Activated B cell treated with CpG ODN at 0.5 μM for 24 hours (primary cell): ENCODE measurements at regions of chr19 and their contacts with region 1.

Region 1: GRCh38 chr19:21851596-21852345 is 15.8 kb upstream of the ZNF43 start:
- DNase-seq: peak; percentile 79
- ATAC-seq: peak; percentile 99
- H3K4me3 Mint-ChIP-seq: peak overlapping the region; percentile 95
- H3K27ac Mint-ChIP-seq: peak overlapping the region; percentile 84
- H3K4me1 Mint-ChIP-seq: peaks cover 21% of the 10 kb centered on the region
- H3K27me3 Mint-ChIP-seq: no peaks in the 10 kb centered on the region
- CTCF ChIP-seq: no peak

Region 2: GRCh38 chr19:20565321-20566018 is 1286.3 kb before region 1 on chr19 and contains the start of gene ZNF737:
- CTCF ChIA-PET with region 1: no interaction called
- POLR2A ChIA-PET with region 1: interaction called, 4 read pairs
- intact Hi-C with region 1: loop called (anchors 5 kb)
- DNase-seq: peak; percentile 72
- ATAC-seq: peak; percentile 90
- H3K4me3 Mint-ChIP-seq: peak within 1 kb of the TSS; percentile 99
- H3K27ac Mint-ChIP-seq: peak within 1 kb of the TSS; percentile 99
- H3K4me1 Mint-ChIP-seq: peaks cover 32% of the 10 kb centered on the region
- H3K27me3 Mint-ChIP-seq: no peaks in the 10 kb centered on the region
- CTCF ChIP-seq: no peak
- total RNA-seq, gene ZNF737: 42.7 and 50.9 TPM in 2 replicates

Region 3: GRCh38 chr19:21786931-21787330 is 64.8 kb before region 1 on chr19:
- CTCF ChIA-PET with region 1: no interaction called
- POLR2A ChIA-PET with region 1: no interaction called
- intact Hi-C with region 1: no loop called
- DNase-seq: no peak
- ATAC-seq: no peak
- H3K4me3 Mint-ChIP-seq: no peak overlapping the region
- H3K27ac Mint-ChIP-seq: no peak overlapping the region
- H3K4me1 Mint-ChIP-seq: no peaks in the 10 kb centered on the region
- H3K27me3 Mint-ChIP-seq: no peaks in the 10 kb centered on the region
- CTCF ChIP-seq: no peak

Region 4: GRCh38 chr19:21835810-21836444 is 15.8 kb before region 1 on chr19 and contains the start of gene ZNF43:
- CTCF ChIA-PET with region 1: interaction called, 5 read pairs
- POLR2A ChIA-PET with region 1: interaction called, 63 read pairs
- intact Hi-C with region 1: loop called (anchors 1 kb)
- DNase-seq: peak; percentile 77
- ATAC-seq: peak; percentile 98
- H3K4me3 Mint-ChIP-seq: peak within 1 kb of the TSS; percentile 100
- H3K27ac Mint-ChIP-seq: peak within 1 kb of the TSS; percentile 100
- H3K4me1 Mint-ChIP-seq: peaks cover 38% of the 10 kb centered on the region
- H3K27me3 Mint-ChIP-seq: no peaks in the 10 kb centered on the region
- CTCF ChIP-seq: no peak
- total RNA-seq, gene ZNF43: 41.8 and 52.4 TPM in 2 replicates

Region 5: DNA sequence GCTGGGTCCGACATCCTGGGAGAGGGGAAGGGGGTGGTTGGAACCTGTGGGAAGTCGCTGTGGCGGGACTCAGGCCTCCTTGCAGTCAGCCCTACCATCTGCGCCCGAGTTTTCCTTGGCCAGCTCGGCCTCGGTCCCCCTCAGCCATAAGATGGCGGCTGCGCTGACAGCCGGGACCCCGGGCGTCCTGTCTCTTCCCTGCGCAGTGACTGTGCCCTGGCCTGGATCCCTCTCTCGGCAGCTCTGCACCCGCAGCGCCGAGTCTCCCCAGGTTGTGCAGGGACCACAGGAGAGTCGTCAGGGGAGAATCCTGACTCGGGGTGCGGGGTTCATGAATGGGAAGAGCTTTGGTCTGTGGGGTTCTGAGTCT is 200.9 kb after region 1 on chr19:
- CTCF ChIA-PET with region 1: no interaction called
- POLR2A ChIA-PET with region 1: interaction called, 9 read pairs
- intact Hi-C with region 1: loop called (anchors 10 kb)
- DNase-seq: no peak
- ATAC-seq: peak; percentile 43
- H3K4me3 Mint-ChIP-seq: peak overlapping the region; percentile 99
- H3K27ac Mint-ChIP-seq: peak overlapping the region; percentile 81
- H3K4me1 Mint-ChIP-seq: peaks cover 8% of the 10 kb centered on the region
- H3K27me3 Mint-ChIP-seq: no peaks in the 10 kb centered on the region
- CTCF ChIP-seq: no peak